Activated B cell treated with CpG ODN at 0.5 μM for 24 hours (primary cell): ENCODE measurements at regions of chr12 and their contacts with region 1.

Region 1: DNA sequence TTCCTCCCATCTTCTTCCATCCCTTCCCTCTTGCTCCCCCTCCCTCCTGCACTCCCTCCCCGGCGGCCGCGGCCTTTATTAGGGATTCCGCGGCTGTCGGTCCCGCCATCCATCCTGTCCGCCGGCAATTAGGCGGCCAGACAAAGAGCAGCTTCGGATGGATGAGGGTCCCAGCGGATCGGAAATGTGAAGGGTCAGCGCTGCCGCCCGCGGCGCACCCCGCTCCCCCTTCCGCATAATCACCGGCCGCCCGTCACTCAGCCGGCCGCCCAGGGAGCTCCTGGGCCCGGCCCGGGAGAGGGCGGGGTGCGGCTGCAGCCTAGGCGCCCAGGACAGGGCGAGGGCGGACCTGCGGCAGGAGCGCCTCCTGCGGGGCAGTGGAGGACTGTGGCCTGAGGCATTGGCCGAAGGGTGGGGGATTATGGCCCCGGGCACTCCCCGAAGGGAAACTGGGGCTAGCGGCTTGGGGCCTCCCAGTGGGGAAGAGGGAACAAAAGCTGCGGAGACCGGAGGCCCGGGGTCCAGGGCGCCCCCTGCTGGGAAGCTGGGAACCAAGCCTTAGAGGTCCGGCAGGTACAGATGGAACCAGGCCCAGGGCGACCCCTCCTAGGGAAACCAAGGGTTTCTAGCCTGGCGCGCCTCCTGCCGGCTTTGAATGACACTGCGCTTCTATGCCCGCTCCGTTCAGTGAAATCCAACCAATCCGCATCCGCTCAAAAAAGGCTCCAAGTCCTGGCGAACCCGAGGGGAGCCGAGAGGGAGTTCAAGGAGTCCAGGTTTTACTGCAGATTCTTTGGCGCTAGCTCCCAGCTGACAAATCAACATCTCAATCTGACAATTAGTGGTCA is 4.4 kb upstream of the DNAJC22 start:
- DNase-seq: peak; percentile 71
- ATAC-seq: peak; percentile 75
- H3K4me3 Mint-ChIP-seq: peak overlapping the region; percentile 67
- H3K27ac Mint-ChIP-seq: no peak overlapping the region
- H3K4me1 Mint-ChIP-seq: peaks cover 53% of the 10 kb centered on the region
- H3K27me3 Mint-ChIP-seq: peaks cover 39% of the 10 kb centered on the region
- CTCF ChIP-seq: peak; percentile 24

Region 2: DNA sequence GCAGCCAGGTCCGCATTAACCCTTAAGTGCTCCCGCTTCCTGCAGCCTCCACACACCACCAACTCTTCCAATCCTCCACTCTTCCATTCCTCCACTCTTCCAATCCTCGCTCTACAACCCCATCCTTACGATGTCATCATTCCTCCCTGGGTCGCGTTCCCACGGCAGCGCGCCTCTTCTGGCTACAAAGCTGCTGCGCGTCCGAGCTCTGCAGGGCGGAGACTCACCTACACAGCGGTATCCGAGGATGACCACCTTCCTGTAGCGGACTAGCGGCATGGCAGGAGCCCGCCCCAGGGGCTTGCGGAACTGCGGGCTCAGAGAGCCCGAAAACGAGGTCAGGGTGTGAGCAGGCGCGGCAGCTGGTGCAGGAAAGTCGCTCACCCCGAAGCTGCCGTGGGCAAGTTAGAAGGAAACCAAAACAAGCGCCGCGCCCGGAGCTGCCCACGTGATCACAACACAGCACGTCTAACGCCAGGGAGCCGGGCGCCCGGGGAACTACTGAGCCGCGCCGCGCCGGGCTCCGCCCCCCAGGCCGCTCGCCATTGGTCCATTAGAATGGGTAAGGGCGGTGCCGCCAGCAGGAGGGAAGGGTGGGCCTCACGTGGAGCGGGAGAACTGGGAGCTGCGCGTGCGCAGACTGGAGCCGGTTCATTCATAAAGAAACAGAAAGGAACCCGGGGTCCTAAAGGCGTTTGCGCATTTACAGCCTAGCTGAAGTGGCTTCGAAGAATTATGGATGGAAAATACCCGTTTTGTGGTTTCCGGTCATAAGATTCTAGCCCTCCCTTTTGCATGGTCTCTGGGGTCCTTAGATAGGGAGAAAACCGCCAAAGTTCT is 272.6 kb before region 1 on chr12 and contains the start of gene RHEBL1:
- CTCF ChIA-PET with region 1: no interaction called
- POLR2A ChIA-PET with region 1: no interaction called
- intact Hi-C with region 1: loop called (anchors 10 kb)
- DNase-seq: peak; percentile 98
- ATAC-seq: peak; percentile 100
- H3K4me3 Mint-ChIP-seq: peak within 1 kb of the TSS; percentile 99
- H3K27ac Mint-ChIP-seq: peak within 1 kb of the TSS; percentile 93
- H3K4me1 Mint-ChIP-seq: peaks cover 15% of the 10 kb centered on the region
- H3K27me3 Mint-ChIP-seq: no peaks in the 10 kb centered on the region
- CTCF ChIP-seq: no peak
- total RNA-seq, gene RHEBL1: 3.2 and 3.3 TPM in 2 replicates

Region 3: DNA sequence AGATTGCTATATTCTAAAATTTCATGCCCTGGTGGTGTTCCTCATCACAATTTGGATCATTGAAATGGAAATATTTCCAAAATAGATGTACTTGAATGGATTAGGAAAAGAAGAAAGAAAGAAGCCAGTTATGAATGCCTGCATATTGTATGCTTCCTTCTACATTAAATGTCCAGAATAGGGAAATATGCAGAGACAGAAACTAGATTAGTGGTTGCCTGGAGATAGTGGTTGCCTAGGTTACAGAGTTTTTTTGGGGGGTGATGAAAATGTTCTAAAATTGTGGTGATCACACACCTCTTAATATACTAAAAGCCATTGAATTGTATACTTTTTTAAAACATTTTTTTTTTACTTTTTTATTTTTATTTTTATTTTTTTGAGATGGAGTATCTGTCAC is 171.4 kb before region 1 on chr12:
- CTCF ChIA-PET with region 1: no interaction called
- POLR2A ChIA-PET with region 1: no interaction called
- intact Hi-C with region 1: no loop called
- DNase-seq: no peak
- ATAC-seq: no peak
- H3K4me3 Mint-ChIP-seq: no peak overlapping the region
- H3K27ac Mint-ChIP-seq: no peak overlapping the region
- H3K4me1 Mint-ChIP-seq: no peaks in the 10 kb centered on the region
- H3K27me3 Mint-ChIP-seq: no peaks in the 10 kb centered on the region
- CTCF ChIP-seq: no peak

Region 4: DNA sequence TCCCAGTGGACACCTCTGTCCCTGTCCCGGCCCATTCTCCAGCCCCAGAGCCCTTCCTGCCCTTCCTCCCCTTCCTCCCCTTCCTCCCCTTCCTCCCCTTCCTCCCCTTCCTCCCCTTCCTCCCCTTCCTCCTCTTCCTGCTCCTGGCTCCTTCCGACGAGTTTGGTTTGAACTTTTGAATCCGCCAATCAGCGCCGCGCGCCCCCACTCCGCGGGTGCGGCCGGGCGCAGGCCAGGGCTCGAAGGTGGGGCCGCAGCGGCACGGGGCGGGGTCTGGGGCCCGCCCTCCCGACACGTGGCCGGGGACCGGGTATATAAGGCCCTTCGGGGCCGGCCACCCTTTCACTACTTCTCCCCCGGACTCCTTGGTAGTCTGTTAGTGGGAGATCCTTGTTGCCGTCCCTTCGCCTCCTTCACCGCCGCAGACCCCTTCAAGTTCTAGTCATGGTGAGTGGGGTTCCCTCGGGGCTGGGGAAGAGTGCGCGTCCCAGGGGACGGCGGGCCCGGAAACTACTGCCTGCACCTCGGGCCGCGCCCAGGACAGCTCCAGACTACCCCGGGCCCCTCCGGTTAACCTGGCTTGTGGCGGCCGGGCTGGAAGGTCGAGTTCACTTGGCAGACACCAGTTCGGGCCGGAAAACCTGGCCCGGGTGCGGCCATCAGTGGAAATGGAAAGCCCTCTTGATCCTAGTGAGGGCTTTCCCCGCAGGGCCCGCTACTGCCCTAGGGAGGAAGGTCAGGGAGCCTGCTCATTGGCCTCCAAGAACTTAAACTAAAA is 77.4 kb before region 1 on chr12 and contains the start of gene TUBA1C:
- CTCF ChIA-PET with region 1: no interaction called
- POLR2A ChIA-PET with region 1: interaction called, 6 read pairs
- intact Hi-C with region 1: loop called (anchors 2 kb)
- DNase-seq: peak; percentile 90
- ATAC-seq: peak; percentile 90
- H3K4me3 Mint-ChIP-seq: peak within 1 kb of the TSS; percentile 94
- H3K27ac Mint-ChIP-seq: peak within 1 kb of the TSS; percentile 92
- H3K4me1 Mint-ChIP-seq: peaks cover 20% of the 10 kb centered on the region
- H3K27me3 Mint-ChIP-seq: no peaks in the 10 kb centered on the region
- CTCF ChIP-seq: no peak
- total RNA-seq, gene TUBA1C: 141 and 142 TPM in 2 replicates

Region 5: DNA sequence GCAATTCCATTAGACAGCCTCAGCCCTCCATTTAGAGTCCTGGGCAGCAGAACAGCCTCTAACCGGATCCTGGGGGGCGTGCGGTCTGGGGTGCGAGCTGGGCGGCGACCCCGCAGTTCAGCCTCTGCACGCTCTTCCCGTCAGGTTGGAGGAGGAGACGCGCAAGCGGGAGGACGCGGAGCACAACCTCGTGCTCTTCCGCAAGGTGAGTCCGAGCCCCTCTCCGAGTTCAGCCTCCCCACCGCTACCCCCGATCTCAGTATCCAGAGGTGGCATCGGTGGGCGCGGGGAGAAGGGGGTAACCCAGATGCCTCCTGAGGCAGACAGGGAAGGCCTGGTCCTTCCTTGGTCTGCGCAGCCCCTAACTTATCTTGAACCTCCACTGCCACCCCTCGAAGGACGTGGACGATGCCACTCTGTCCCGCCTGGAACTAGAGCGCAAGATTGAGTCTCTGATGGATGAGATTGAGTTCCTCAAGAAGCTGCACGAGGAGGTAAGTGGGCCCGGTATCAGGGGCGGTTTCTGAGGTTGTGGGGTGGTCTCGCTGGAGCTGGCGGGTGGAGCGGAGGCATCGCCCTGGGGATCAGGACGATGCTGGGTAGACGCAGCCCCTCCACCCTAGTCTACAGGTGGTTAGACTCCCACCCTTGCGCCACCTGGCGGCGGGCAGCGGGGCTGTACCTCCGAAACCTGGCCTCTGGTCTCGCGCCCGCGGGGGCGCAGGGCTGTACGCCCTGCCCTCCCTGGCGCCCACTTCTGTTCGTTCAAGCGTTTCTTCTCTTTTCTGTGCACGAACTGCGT is 46.1 kb before region 1 on chr12:
- CTCF ChIA-PET with region 1: interaction called, 14 read pairs
- POLR2A ChIA-PET with region 1: interaction called, 4 read pairs
- intact Hi-C with region 1: no loop called
- DNase-seq: peak; percentile 58
- ATAC-seq: peak; percentile 79
- H3K4me3 Mint-ChIP-seq: peak overlapping the region; percentile 70
- H3K27ac Mint-ChIP-seq: no peak overlapping the region
- H3K4me1 Mint-ChIP-seq: peaks cover 26% of the 10 kb centered on the region
- H3K27me3 Mint-ChIP-seq: peaks cover 37% of the 10 kb centered on the region
- CTCF ChIP-seq: no peak

Region 6: GRCh38 chr12:49331380-49332222 is 10.7 kb before region 1 on chr12:
- CTCF ChIA-PET with region 1: interaction called, 59 read pairs
- POLR2A ChIA-PET with region 1: interaction called, 6 read pairs
- intact Hi-C with region 1: loop called (anchors 1 kb)
- DNase-seq: no peak
- ATAC-seq: no peak
- H3K4me3 Mint-ChIP-seq: no peak overlapping the region
- H3K27ac Mint-ChIP-seq: no peak overlapping the region
- H3K4me1 Mint-ChIP-seq: peaks cover 16% of the 10 kb centered on the region
- H3K27me3 Mint-ChIP-seq: peaks cover 33% of the 10 kb centered on the region
- CTCF ChIP-seq: no peak